ENCODE measurements at regions of chr11 and their contacts with region 1.

Region 1: DNA sequence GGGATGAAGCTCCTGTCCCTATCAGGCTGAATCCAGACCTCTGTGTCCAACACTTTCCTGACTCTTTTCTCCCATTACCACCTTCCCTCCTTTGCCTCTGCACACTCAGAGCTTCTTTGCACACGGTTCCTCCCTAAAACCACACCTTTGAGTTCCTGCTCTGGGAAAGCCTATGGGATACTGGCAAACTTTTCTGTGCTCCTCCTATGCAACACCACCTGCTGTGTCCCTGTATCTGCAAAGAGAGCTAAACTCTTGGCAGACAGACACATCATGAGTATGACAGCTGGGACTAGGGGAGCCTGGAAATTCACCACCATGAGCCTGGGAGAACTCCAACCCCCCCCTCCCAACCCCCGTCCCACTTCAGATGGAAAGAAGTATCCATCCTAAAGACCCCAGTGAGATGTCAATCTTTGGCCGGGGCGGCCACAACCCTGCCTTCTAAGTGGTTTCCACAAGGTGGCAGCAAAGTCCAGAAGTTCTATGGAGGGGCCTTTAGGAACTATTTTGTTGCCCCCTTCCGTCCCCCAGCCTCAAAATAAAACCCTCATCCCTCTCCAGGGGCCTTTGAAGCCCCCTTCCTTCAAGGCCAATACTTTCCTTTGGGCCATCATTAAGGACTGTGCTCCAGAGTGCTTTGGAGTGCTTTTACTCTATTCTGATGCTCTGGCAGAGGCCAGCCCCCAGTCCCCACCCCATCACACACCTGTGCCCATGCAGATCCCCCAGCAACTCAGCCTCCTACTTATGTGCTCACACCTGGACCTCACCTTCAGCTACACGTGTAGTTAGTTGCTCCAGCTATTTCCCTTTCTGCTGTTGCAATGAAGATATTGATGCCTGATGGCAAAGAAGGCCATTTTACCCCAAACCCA is 19.4 kb downstream of the HTR3A start:
- DNase-seq: peak; percentile 10 to 40 (median 23)
- H3K4me3 ChIP-seq: no peak overlapping the region
- H3K27ac ChIP-seq: no peak overlapping the region
- H3K4me1 ChIP-seq: no peaks in the 10 kb centered on the region
- H3K27me3 ChIP-seq: peaks cover 0 to 29% (median 6%) of the 10 kb centered on the region in 5 experiments

Region 2: DNA sequence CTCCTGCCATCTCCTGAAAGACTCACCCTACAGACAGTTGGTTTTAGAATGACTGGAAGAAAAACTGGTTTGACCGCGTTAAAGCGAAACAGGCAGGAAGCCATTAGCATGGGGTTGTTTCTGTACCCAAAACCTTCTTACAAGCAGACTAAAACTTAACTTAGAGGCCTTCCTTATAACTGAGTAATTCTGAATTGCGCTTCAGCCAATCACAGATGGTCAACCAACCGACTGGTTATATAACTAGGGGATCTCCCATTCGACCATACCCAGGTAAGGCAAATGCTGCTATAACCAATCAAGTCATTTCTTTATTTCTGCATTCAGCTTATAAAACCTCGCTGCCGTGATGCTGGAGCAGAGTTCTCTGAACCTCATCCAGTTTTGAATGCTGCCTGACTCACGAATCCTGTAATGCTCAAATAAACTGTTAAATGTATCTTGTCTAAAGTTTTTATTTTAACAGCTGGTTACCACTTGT is 431.3 kb before region 1 on chr11:
- CTCF ChIA-PET with region 1: no interaction called
- POLR2A ChIA-PET with region 1: no interaction called
- DNase-seq: no peak
- H3K4me3 ChIP-seq: no peak overlapping the region
- H3K27ac ChIP-seq: no peak overlapping the region
- H3K4me1 ChIP-seq: no peaks in the 10 kb centered on the region
- H3K27me3 ChIP-seq: peaks cover 0 to 19% (median 2%) of the 10 kb centered on the region in 5 experiments

Region 3: GRCh38 chr11:113896156-113896879 is 98.0 kb before region 1 on chr11:
- CTCF ChIA-PET with region 1: interaction called, 12 read pairs
- POLR2A ChIA-PET with region 1: no interaction called
- DNase-seq: peak; percentile 28 to 68 (median 58)
- H3K4me3 ChIP-seq: no peak overlapping the region
- H3K27ac ChIP-seq: no peak overlapping the region
- H3K4me1 ChIP-seq: peaks cover 0 to 7% (median 0%) of the 10 kb centered on the region in 4 experiments
- H3K27me3 ChIP-seq: peaks cover 0 to 2% (median 0%) of the 10 kb centered on the region in 5 experiments

Region 4: GRCh38 chr11:114026355-114026754 is 32.0 kb after region 1 on chr11:
- CTCF ChIA-PET with region 1: interaction called, 22 read pairs
- POLR2A ChIA-PET with region 1: no interaction called
- DNase-seq: peak; percentile 76 to 87 (median 87)
- H3K4me3 ChIP-seq: no peak overlapping the region
- H3K27ac ChIP-seq: no peak overlapping the region
- H3K4me1 ChIP-seq: no peaks in the 10 kb centered on the region
- H3K27me3 ChIP-seq: peaks cover 0 to 10% (median 0%) of the 10 kb centered on the region in 5 experiments

Region 5: GRCh38 chr11:114036156-114036811 is 42.0 kb after region 1 on chr11:
- CTCF ChIA-PET with region 1: interaction called, 25 read pairs
- POLR2A ChIA-PET with region 1: no interaction called
- DNase-seq: peak; percentile 73 to 76 (median 75)
- H3K4me3 ChIP-seq: peak overlapping the region in 4 of 7 experiments; percentile 6 to 66 (median 37)
- H3K27ac ChIP-seq: no peak overlapping the region
- H3K4me1 ChIP-seq: peaks cover 0 to 9% (median 6%) of the 10 kb centered on the region in 4 experiments
- H3K27me3 ChIP-seq: peaks cover 0 to 4% (median 0%) of the 10 kb centered on the region in 5 experiments

Measured in common myeloid progenitor, CD34-positive (primary cell).